Posterior vena cava (tissue), 2 donors: ENCODE measurements at regions of chr6 and their contacts with region 1.

Region 1: GRCh38 chr6:169654598-169655391 is 47.0 kb downstream of the WDR27 start:
- DNase-seq: peak; percentile 91

Region 2: GRCh38 chr6:169224185-169224695 is 430.6 kb before region 1 on chr6:
- intact Hi-C with region 1: no loop called
- DNase-seq: peak; percentile 84

Region 3: DNA sequence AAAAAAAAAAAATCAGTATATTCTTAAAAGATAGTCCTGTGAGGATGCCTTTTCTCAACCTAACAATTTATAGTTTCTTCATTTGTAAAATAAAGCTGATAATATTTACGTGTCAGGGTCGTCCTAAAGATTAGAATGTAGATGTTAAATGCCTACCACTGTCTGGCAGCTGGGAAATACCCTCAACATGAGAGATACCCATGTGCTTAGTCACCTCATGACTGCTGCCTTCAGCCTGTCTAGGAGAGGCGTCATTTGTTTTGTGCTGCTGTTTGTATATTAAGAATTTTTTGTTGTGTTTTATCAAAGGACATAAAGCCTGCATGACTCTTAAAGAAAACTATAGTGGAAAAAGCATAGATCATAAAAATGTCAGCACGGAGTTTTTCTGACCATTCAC is 661.3 kb after region 1 on chr6:
- intact Hi-C with region 1: loop called in 1 of 2 experiments (anchors 10 kb)
- DNase-seq: no peak